ENCODE measurements at regions of chr3 and their contacts with region 1.

Region 1: GRCh38 chr3:172939651-172940293 is 189.2 kb downstream of the ECT2 start:
- DNase-seq: peak in 3 of 4 experiments; percentile 11 to 70 (median 13)
- ATAC-seq: peak; percentile 83
- H3K4me3 ChIP-seq: no peak overlapping the region
- H3K27ac ChIP-seq: no peak overlapping the region
- H3K4me1 ChIP-seq: peaks cover 0 to 14% of the 10 kb centered on the region in 2 experiments; a peak in 1 of 5 replicates
- H3K27me3 ChIP-seq: no peaks in the 10 kb centered on the region
- CTCF ChIP-seq: no peak
- EP300 ChIP-seq: peak; percentile 20; the same call in 1 of the 2 replicates
- POLR2A ChIP-seq: no peak
- RAD21 ChIP-seq: no peak

Region 2: GRCh38 chr3:172929451-172929850 is 10.3 kb before region 1 on chr3:
- CTCF ChIA-PET with region 1: no interaction called
- POLR2A ChIA-PET with region 1: interaction called, 11 read pairs
- in situ Hi-C with region 1: no loop called
- intact Hi-C with region 1: no loop called
- DNase-seq: no peak
- ATAC-seq: no peak
- H3K4me3 ChIP-seq: no peak overlapping the region
- H3K27ac ChIP-seq: no peak overlapping the region
- H3K4me1 ChIP-seq: peaks cover 0 to 4% of the 10 kb centered on the region in 2 experiments; a peak in 1 of 5 replicates
- H3K27me3 ChIP-seq: no peaks in the 10 kb centered on the region
- CTCF ChIP-seq: no peak
- EP300 ChIP-seq: no peak
- POLR2A ChIP-seq: no peak
- RAD21 ChIP-seq: no peak

Region 3: DNA sequence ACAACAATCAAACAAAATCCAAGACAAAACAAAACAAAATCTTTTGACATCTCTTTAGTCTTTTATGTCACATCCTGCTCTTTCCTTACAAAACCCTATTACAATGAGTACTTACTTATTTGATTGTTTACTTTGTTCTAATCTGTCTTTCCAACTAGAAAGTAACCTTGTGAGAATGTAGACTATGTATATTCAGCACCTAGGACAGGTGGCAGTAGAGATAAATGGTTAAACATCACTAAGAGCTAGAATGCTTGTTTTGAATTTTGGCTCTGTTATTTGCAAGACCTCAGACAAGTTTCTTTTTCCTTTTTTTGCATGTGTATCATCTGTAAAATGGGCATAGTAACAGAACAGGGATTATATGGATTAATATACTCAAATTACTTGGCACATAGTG is 1886.3 kb after region 1 on chr3:
- CTCF ChIA-PET with region 1: no interaction called
- POLR2A ChIA-PET with region 1: no interaction called
- in situ Hi-C with region 1: no loop called
- intact Hi-C with region 1: no loop called
- DNase-seq: no peak
- ATAC-seq: no peak
- H3K4me3 ChIP-seq: no peak overlapping the region
- H3K27ac ChIP-seq: no peak overlapping the region
- H3K4me1 ChIP-seq: no peaks in the 10 kb centered on the region
- H3K27me3 ChIP-seq: no peaks in the 10 kb centered on the region
- CTCF ChIP-seq: no peak
- EP300 ChIP-seq: no peak
- POLR2A ChIP-seq: no peak
- RAD21 ChIP-seq: no peak